ENCODE measurements at regions of chr2 and their contacts with region 1.

Region 1: DNA sequence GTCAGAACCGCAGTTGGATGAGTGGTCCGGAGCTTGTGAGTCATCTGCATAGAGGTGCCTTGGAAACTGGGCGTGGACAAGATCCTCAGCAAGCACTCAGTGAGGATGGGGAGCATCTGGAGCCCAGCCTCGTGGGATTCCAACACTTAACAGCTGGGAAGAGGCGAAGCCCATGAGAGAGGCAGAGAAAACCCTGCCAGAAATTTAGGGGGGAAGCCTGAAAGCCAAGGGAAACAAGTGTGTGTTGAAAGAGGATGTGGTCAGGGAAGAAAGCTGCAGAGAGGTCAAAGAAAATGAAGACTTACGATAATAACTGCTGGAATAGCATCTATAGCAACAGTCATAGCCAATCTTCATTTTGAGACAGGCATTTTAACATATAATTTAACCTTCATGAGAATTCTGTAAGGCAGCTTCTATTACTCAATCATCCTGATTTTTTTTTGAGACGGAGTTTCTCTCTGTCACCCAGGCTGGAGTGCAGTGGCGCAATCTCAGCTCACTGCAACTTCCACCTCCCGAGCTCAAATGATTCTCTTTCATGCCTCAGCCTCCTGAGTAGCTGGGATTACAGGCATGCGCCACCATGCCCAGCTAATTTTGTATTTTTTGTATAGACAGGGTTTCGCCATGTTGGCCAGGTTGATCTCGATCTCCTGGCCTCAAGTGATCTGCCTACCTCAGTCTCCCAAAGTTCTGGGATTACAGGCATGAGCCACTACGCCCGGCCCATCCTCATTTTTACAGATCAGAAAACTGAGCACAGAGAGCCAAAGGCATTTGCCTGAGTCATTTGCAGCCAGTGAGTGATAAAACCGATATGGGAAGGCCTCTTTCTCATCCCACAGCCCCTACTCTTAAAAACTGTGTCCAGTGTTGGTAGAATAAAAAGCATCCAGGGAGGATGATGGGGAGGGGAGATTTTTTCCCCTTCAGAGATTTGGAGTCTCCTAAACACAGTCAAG is 214.4 kb upstream of the EPAS1 start:
- DNase-seq: no peak
- H3K4me3 ChIP-seq: no peak overlapping the region
- H3K27ac ChIP-seq: no peak overlapping the region
- H3K4me1 ChIP-seq: no peaks in the 10 kb centered on the region
- H3K27me3 ChIP-seq: no peaks in the 10 kb centered on the region
- CTCF ChIP-seq: no peak

Region 2: DNA sequence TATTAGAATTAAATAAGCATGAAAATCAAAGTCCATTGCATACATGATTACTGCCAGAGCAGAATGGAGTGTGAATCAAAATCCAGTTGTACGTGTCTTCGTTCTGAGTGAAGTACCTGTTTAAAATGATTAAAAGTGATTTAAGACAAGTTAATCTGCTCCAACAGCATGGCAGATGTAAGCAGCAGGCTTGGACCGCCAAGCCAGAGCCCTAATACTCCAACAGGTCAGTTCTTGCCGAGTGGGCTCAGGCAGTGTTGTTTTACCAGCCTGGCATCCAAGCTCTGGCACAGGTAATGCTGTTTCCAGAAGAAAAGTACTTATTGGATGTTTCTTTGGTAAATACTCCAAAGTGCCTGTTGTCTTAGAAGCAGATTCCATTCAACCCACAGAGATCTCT is 43.0 kb after region 1 on chr2:
- dilution Hi-C with region 1: loop called (anchors 5 kb)
- DNase-seq: no peak
- H3K4me3 ChIP-seq: no peak overlapping the region
- H3K27ac ChIP-seq: no peak overlapping the region
- H3K4me1 ChIP-seq: no peaks in the 10 kb centered on the region
- H3K27me3 ChIP-seq: no peaks in the 10 kb centered on the region
- CTCF ChIP-seq: no peak

Region 3: DNA sequence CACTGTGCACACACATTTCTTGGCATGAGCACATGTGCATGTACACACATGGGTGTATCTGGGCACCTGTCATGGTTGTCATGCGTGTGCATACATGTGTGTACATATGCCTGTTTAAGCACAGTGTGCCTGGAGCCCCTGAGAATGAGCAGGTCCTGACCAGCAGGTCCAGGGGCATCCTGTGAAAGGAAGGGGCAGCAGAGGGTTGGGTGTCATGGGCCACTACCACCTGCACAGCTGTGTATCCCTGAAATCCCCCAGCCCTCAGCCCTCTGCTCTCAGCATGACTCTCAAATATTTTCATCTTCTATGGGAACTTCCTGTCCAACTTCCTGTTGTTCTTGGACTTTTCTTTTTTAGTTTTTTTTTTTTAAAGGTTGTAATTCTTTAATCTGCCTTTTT is 117.4 kb after region 1 on chr2:
- dilution Hi-C with region 1: no loop called
- DNase-seq: no peak
- H3K4me3 ChIP-seq: no peak overlapping the region
- H3K27ac ChIP-seq: no peak overlapping the region
- H3K4me1 ChIP-seq: peaks cover 28% of the 10 kb centered on the region
- H3K27me3 ChIP-seq: no peaks in the 10 kb centered on the region
- CTCF ChIP-seq: no peak